ENCODE measurements at regions of chr6 and their contacts with region 1.

Region 1: DNA sequence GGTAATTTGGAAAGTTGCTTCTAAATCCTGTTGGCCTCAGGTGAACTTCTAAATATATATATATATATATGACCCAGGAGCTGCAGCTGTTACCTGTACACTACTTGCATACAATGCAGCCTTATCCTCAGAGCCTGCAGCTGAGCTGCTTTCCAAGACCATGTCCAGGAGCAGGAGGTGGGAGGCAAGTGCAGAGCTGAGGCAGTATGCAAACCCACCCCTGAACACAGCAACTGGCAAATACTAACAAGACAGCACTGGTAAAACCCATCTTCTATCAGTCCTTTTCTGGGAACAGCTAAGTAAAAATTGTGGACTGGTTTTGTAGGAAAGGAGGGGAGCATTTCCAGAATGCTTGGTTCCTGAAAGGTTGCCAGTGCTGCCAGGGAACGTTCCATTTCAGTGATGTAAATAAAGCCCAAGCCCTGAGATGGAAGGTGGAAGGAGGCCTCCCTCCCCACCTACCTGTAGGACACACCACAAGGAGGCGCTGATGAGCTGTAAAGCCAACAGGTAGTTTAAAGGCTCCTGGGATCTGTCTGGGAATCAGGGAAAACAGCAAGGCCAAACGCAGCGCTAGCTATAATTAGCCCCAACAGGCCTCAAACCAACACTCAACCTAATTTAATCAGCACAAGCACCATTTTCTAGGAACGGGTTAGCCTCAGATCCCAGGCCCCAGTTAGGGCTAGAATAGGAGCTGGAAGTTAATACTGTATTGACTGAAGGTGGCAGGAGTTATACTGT is 93.8 kb upstream of the MAP7 start:
- DNase-seq: peak; percentile 40
- ATAC-seq: peak; percentile 90
- H3K4me3 ChIP-seq: no peak overlapping the region
- H3K27ac ChIP-seq: no peak overlapping the region
- H3K4me1 ChIP-seq: no peaks in the 10 kb centered on the region
- H3K27me3 ChIP-seq: no peaks in the 10 kb centered on the region
- CTCF ChIP-seq: peak; percentile 85 to 92 (median 87)
- EP300 ChIP-seq: no peak
- POLR2A ChIP-seq: no peak
- RAD21 ChIP-seq: peak; percentile 97

Region 2: GRCh38 chr6:136429264-136430065 is 214.6 kb before region 1 on chr6:
- CTCF ChIA-PET with region 1: no interaction called
- POLR2A ChIA-PET with region 1: no interaction called
- RAD21 ChIA-PET with region 1: no interaction called
- SMC1A ChIA-PET with region 1: no interaction called
- in situ Hi-C with region 1: no loop called
- intact Hi-C with region 1: no loop called
- DNase-seq: no peak
- ATAC-seq: no peak
- H3K4me3 ChIP-seq: no peak overlapping the region
- H3K27ac ChIP-seq: no peak overlapping the region
- H3K4me1 ChIP-seq: no peaks in the 10 kb centered on the region
- H3K27me3 ChIP-seq: no peaks in the 10 kb centered on the region; a peak in 1 of 4 replicates
- CTCF ChIP-seq: no peak
- EP300 ChIP-seq: no peak
- POLR2A ChIP-seq: no peak
- RAD21 ChIP-seq: no peak

Region 3: DNA sequence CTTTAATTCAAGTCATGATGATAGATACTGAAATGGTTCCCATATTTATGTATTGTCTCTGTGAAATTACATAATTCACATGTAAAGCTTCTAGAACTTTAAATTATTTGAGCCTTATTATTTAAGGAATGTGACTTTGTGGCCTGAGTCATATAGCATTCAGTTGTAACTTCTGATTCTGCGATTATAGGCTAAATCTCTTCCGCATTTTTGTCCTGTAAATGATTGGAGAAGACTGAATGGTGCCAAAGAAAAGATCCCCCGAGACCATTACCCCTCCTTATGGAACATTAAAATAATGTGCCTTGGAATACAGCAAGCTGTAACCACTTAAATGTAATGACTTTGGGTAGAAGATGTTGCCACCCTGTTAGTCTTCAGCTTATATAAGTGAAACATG is 30.5 kb before region 1 on chr6:
- CTCF ChIA-PET with region 1: interaction called, 38 read pairs
- POLR2A ChIA-PET with region 1: no interaction called
- RAD21 ChIA-PET with region 1: interaction called, 4 read pairs
- SMC1A ChIA-PET with region 1: interaction called, 14 read pairs
- in situ Hi-C with region 1: no loop called
- intact Hi-C with region 1: no loop called
- DNase-seq: no peak
- ATAC-seq: no peak
- H3K4me3 ChIP-seq: no peak overlapping the region
- H3K27ac ChIP-seq: no peak overlapping the region
- H3K4me1 ChIP-seq: no peaks in the 10 kb centered on the region
- H3K27me3 ChIP-seq: no peaks in the 10 kb centered on the region
- CTCF ChIP-seq: no peak
- EP300 ChIP-seq: no peak
- POLR2A ChIP-seq: no peak
- RAD21 ChIP-seq: no peak

Region 4: GRCh38 chr6:136677831-136678230 is 33.8 kb after region 1 on chr6:
- CTCF ChIA-PET with region 1: interaction called, 48 read pairs
- POLR2A ChIA-PET with region 1: interaction called, 3 read pairs
- RAD21 ChIA-PET with region 1: interaction called, 5 read pairs
- SMC1A ChIA-PET with region 1: interaction called, 6 read pairs
- in situ Hi-C with region 1: no loop called
- intact Hi-C with region 1: no loop called
- DNase-seq: no peak
- ATAC-seq: no peak
- H3K4me3 ChIP-seq: no peak overlapping the region
- H3K27ac ChIP-seq: no peak overlapping the region
- H3K4me1 ChIP-seq: no peaks in the 10 kb centered on the region
- H3K27me3 ChIP-seq: no peaks in the 10 kb centered on the region
- CTCF ChIP-seq: no peak
- EP300 ChIP-seq: no peak
- POLR2A ChIP-seq: no peak
- RAD21 ChIP-seq: no peak

Region 5: GRCh38 chr6:136716917-136717715 is 73.1 kb after region 1 on chr6:
- CTCF ChIA-PET with region 1: interaction called, 46 read pairs
- POLR2A ChIA-PET with region 1: interaction called, 4 read pairs
- RAD21 ChIA-PET with region 1: interaction called, 56 read pairs
- SMC1A ChIA-PET with region 1: interaction called, 77 read pairs
- in situ Hi-C with region 1: no loop called
- intact Hi-C with region 1: no loop called
- DNase-seq: peak; percentile 47
- ATAC-seq: peak; percentile 48
- H3K4me3 ChIP-seq: peak overlapping the region; percentile 49
- H3K27ac ChIP-seq: peak overlapping the region; percentile 97
- H3K4me1 ChIP-seq: peaks cover 38% of the 10 kb centered on the region
- H3K27me3 ChIP-seq: no peaks in the 10 kb centered on the region
- CTCF ChIP-seq: no peak
- EP300 ChIP-seq: no peak
- POLR2A ChIP-seq: no peak
- RAD21 ChIP-seq: no peak

Region 6: GRCh38 chr6:136751522-136751956 is 107.5 kb after region 1 on chr6:
- CTCF ChIA-PET with region 1: interaction called, 14 read pairs
- POLR2A ChIA-PET with region 1: no interaction called
- RAD21 ChIA-PET with region 1: interaction called, 4 read pairs
- SMC1A ChIA-PET with region 1: interaction called, 7 read pairs
- in situ Hi-C with region 1: no loop called
- intact Hi-C with region 1: no loop called
- DNase-seq: peak; percentile 94
- ATAC-seq: peak; percentile 93
- H3K4me3 ChIP-seq: peak overlapping the region; percentile 31; the same call in 1 of the 2 replicates
- H3K27ac ChIP-seq: peak overlapping the region; percentile 93
- H3K4me1 ChIP-seq: peaks cover 48% of the 10 kb centered on the region
- H3K27me3 ChIP-seq: no peaks in the 10 kb centered on the region
- CTCF ChIP-seq: no peak
- EP300 ChIP-seq: peak; percentile 21 to 70; a peak in 3 of 4 replicates
- POLR2A ChIP-seq: no peak
- RAD21 ChIP-seq: 0 out of 2 replicates have a peak, but pooled peaks have one; percentile 28

Region 7: DNA sequence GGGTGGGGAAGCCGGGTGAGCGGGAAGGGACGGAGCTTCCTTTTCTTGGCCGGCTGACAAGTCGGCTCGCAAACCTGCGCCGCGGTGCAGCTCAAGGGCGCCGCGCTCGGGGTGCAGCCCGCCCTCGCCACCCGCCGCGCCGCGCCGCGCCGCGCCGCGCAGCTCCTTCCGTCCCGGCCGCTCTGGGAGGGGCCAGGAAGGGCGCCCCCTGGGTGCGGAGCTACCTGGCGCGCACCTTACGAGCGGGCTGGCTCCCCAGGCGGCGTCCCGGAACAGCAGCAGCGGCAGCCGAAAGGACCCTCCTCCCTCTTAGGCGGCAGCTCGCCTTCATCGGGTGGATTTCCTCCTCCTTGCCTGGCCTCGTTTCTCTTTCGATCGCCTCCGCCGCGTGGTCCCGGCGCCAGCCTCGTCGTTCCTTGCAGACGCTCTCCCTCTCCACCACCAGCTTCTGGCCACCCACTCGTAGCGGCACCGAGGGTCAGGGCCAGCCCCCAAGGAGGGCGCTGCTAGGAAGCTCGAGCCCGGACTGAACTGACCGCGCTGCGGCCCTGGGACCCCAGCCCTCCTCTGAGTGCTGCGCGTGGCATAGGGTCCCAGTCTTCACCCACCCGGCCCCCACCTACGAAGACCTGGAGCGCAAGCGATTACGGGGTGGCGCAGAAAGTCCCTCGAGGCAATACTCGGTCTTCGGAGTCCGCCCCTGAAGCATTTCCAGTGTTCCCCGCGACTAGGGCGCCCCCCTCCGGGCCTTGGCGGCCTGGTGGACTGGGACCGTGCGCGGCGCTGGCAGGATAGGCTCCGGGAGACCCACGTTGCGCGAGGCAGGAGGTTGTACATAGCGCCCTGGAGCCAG is 148.6 kb after region 1 on chr6 and contains the start of gene MAP3K5:
- CTCF ChIA-PET with region 1: interaction called, 411 read pairs
- POLR2A ChIA-PET with region 1: interaction called, 59 read pairs
- RAD21 ChIA-PET with region 1: interaction called, 296 read pairs
- SMC1A ChIA-PET with region 1: interaction called, 275 read pairs
- in situ Hi-C with region 1: loop called (anchors 5 kb)
- intact Hi-C with region 1: loop called (anchors 1 kb)
- DNase-seq: no peak
- ATAC-seq: peak; percentile 76
- H3K4me3 ChIP-seq: peak within 1 kb of the TSS; percentile 71
- H3K27ac ChIP-seq: peak within 1 kb of the TSS; percentile 98
- H3K4me1 ChIP-seq: peaks cover 6% of the 10 kb centered on the region
- H3K27me3 ChIP-seq: no peaks in the 10 kb centered on the region
- CTCF ChIP-seq: peak; percentile 79 to 91 (median 84)
- EP300 ChIP-seq: peak in 1 of 2 experiments; percentile 4; a peak in 1 of 4 replicates
- POLR2A ChIP-seq: peak; percentile 87
- RAD21 ChIP-seq: peak; percentile 98
- polyA plus RNA-seq, gene MAP3K5: 5.4 to 11.1 TPM

Region 8: DNA sequence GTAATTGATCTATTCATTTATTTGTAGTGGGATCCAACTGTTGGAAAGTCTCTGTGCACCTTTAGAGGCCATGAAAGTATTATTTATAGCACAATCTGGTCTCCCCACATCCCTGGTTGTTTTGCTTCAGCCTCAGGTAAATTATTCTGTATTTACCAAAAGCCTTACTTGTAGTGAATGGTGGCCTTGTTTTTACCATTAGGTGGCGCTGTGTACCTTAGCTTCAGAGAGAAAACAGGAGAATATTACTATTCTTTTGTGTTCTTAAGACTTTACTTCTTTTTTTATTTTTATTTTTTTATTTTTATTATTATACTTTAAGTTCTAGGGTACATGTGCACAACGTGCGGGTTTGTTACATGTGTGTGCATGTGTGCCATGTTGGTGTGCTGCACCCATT is 202.0 kb after region 1 on chr6:
- CTCF ChIA-PET with region 1: interaction called, 17 read pairs
- POLR2A ChIA-PET with region 1: no interaction called
- RAD21 ChIA-PET with region 1: interaction called, 3 read pairs
- SMC1A ChIA-PET with region 1: interaction called, 13 read pairs
- in situ Hi-C with region 1: no loop called
- intact Hi-C with region 1: no loop called
- DNase-seq: no peak
- ATAC-seq: peak; percentile 68
- H3K4me3 ChIP-seq: no peak overlapping the region
- H3K27ac ChIP-seq: no peak overlapping the region
- H3K4me1 ChIP-seq: no peaks in the 10 kb centered on the region
- H3K27me3 ChIP-seq: no peaks in the 10 kb centered on the region
- CTCF ChIP-seq: peak; percentile 53 to 64 (median 56)
- EP300 ChIP-seq: no peak
- POLR2A ChIP-seq: no peak
- RAD21 ChIP-seq: peak; percentile 78

Measured in GM12878 (cell line).